ENCODE measurements at regions of chr6 and their contacts with region 1.

Region 1: DNA sequence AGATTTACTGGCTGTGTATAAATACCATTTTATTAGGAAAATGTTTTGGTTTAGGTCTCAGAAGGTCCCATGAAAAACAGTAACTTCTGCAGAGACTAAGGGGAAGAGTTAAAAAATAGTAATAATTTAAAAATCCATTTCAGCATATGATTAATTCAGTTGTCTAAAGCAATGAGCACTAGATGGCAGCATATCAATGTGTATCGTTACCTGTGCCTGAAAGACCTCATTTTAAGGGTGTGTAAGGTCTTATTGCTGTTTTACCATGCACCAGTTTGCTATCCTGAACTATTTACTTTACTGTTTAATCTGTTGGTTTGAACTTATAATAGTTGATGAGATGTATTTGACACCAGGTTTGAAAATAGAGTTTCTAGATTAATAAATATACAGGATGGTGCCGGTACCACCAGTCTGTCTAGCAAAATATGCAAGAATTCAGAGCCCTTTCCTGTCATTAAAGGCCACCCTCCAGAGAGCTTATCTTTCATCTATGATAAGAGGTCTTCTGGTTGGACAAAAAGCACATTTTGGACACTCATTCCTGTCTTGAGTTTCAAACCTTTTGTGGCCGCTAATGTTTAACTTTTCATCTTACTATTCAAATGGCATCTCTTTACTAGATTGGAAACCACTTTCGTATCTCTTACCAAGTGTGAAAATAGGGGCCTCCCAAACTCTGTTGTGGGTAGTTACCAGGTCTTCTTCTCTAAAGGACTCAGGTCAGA is 8.9 kb upstream of the AHI1 start:
- DNase-seq: no peak
- H3K4me3 Mint-ChIP-seq: no peak overlapping the region
- H3K27ac Mint-ChIP-seq: no peak overlapping the region
- H3K4me1 Mint-ChIP-seq: peaks cover 11% of the 10 kb centered on the region
- H3K27me3 Mint-ChIP-seq: no peaks in the 10 kb centered on the region

Region 2: DNA sequence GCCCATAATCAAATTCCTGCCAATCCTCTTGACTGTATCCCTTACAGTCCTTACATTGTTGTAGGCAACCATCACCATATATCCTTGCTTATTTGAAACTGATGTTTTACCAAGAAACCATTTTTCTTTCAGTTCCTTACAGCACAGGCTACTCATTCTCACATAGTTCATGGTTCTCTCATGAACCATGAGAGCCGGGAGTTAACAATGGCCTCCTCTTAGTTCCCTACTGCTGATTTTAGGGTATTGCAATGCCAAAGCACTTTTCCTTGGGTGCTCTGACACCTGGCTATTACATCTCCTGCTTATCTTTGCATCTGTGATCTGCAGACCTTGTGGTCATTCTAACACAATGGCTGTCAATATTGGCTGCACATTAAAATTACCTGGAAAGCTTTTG is 191.9 kb before region 1 on chr6:
- intact Hi-C with region 1: no loop called
- DNase-seq: no peak
- H3K4me3 Mint-ChIP-seq: no peak overlapping the region
- H3K27ac Mint-ChIP-seq: no peak overlapping the region
- H3K4me1 Mint-ChIP-seq: no peaks in the 10 kb centered on the region
- H3K27me3 Mint-ChIP-seq: no peaks in the 10 kb centered on the region

Region 3: DNA sequence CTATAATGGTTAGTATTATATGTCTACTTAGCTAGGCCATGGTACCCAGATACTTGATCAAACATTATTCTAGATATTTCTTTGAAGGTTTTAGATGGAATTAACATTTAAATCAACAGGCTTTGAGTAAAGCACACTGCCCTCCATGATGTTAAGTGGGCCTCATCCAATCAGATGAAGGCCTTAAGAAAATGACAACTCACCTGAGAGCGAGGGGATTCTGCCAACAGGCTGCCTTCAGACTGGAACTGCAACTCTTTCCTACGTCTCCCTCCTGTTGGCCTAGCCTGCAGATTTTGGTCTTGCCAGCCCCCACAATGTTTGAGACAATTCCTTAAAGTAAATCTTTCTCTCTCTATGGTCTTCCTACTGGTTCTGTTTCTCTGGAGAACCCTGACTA is 146.2 kb before region 1 on chr6:
- intact Hi-C with region 1: no loop called
- DNase-seq: no peak
- H3K4me3 Mint-ChIP-seq: no peak overlapping the region
- H3K27ac Mint-ChIP-seq: no peak overlapping the region
- H3K4me1 Mint-ChIP-seq: peaks cover 16% of the 10 kb centered on the region
- H3K27me3 Mint-ChIP-seq: no peaks in the 10 kb centered on the region

Region 4: DNA sequence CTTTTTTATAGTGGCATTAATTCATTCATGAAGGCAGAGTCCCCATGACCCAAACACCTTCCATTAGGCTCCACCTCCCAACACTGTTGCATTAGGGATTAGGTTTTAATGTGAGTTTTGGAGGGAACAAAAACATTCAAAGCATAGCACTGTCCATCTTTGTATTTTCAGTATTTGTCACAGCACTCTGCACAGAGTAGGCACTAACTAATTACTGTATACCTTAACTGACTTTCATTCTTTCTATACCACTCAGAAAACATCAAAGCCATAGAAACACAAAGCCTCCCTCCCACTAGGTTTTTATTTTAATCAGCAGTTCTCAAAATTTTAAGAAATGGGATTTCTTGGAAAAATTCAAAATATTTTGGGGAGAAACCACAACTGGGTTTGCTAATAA is 12.9 kb after region 1 on chr6:
- intact Hi-C with region 1: loop called (anchors 1 kb)
- DNase-seq: no peak
- H3K4me3 Mint-ChIP-seq: no peak overlapping the region
- H3K27ac Mint-ChIP-seq: no peak overlapping the region
- H3K4me1 Mint-ChIP-seq: peaks cover 29% of the 10 kb centered on the region
- H3K27me3 Mint-ChIP-seq: no peaks in the 10 kb centered on the region

Region 5: DNA sequence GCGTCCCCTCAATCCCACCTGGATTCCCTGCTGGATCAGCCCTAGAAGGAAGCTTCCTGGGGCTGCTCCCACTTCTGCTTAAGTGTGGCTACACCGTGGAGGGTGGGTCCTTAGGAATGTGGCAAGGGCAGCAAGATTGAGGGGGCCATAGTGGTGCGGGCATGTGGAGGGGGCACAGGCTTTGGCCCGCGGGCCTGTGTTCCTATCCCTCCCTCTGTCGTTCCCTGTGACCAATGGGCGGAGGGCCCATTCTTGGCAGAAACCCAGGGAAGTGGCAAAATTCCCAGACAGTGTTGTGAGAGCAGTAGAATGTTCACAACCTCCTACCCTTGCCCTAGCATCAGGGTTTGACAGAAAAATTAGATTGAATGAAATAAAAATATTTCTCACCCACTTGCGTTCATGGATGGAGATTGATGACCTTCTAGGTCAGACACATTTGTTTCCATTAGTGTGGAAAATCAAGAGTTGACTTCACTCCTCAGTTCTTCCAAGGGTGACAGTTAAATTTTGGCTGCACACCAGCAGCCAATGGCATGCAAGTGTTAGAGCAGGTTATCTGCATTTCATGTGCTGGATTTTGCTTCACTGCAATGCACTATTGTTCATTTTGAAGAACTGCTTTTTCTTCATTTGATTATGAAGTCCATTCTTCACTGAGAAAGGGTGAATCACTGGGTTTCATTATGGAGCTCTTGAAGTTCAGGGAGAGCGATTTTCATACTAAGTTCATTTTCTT is 40.4 kb after region 1 on chr6:
- intact Hi-C with region 1: no loop called
- DNase-seq: no peak
- H3K4me3 Mint-ChIP-seq: no peak overlapping the region
- H3K27ac Mint-ChIP-seq: no peak overlapping the region
- H3K4me1 Mint-ChIP-seq: peaks cover 41% of the 10 kb centered on the region
- H3K27me3 Mint-ChIP-seq: no peaks in the 10 kb centered on the region

Region 6: GRCh38 chr6:135909737-135910387 is 403.4 kb after region 1 on chr6:
- intact Hi-C with region 1: loop called (anchors 1 kb)
- DNase-seq: peak; percentile 49
- H3K4me3 Mint-ChIP-seq: no peak overlapping the region
- H3K27ac Mint-ChIP-seq: peak overlapping the region; percentile 24
- H3K4me1 Mint-ChIP-seq: peaks cover 30% of the 10 kb centered on the region
- H3K27me3 Mint-ChIP-seq: no peaks in the 10 kb centered on the region

Region 7: GRCh38 chr6:136226027-136226673 is 719.7 kb after region 1 on chr6:
- intact Hi-C with region 1: loop called (anchors 1 kb)
- DNase-seq: peak; percentile 35
- H3K4me3 Mint-ChIP-seq: peak overlapping the region; percentile 0
- H3K27ac Mint-ChIP-seq: peak overlapping the region; percentile 25
- H3K4me1 Mint-ChIP-seq: peaks cover 27% of the 10 kb centered on the region
- H3K27me3 Mint-ChIP-seq: no peaks in the 10 kb centered on the region

Region 8: DNA sequence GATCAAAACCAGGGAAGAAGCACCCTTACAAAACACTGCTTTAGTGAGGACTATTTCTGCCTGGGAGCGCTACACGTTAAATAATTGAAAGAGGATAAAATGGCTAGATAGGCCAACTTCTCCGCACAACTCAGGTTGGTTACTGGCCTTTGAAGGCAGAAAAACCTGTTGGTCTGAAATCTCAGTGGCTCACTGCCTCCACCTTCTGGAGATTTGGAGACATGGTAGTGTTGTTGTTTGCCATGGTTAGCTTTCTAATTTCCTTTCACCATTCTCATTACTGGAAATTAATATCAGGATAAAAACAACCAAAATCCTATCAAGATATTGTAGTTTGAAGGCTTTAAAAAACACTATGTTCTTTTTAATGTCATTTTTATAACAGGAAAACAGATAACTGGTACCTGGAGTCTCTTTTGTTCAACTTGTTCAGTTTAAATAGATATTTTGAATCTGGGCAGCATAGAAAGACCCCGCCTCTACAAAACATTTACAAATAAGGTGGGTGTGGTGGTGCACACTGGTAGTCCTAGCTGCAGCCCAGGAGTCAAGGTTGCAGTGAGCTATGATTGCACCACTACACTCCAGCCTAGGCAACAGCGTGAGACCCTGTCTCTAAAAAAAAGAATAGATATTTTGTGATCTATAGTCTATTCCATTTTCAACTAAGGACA is 810.7 kb after region 1 on chr6:
- intact Hi-C with region 1: loop called (anchors 1 kb)
- DNase-seq: peak; percentile 41
- H3K4me3 Mint-ChIP-seq: no peak overlapping the region
- H3K27ac Mint-ChIP-seq: no peak overlapping the region
- H3K4me1 Mint-ChIP-seq: no peaks in the 10 kb centered on the region
- H3K27me3 Mint-ChIP-seq: peaks cover 9% of the 10 kb centered on the region